ENCODE measurements at regions of chr1 and their contacts with region 1.

Region 1: DNA sequence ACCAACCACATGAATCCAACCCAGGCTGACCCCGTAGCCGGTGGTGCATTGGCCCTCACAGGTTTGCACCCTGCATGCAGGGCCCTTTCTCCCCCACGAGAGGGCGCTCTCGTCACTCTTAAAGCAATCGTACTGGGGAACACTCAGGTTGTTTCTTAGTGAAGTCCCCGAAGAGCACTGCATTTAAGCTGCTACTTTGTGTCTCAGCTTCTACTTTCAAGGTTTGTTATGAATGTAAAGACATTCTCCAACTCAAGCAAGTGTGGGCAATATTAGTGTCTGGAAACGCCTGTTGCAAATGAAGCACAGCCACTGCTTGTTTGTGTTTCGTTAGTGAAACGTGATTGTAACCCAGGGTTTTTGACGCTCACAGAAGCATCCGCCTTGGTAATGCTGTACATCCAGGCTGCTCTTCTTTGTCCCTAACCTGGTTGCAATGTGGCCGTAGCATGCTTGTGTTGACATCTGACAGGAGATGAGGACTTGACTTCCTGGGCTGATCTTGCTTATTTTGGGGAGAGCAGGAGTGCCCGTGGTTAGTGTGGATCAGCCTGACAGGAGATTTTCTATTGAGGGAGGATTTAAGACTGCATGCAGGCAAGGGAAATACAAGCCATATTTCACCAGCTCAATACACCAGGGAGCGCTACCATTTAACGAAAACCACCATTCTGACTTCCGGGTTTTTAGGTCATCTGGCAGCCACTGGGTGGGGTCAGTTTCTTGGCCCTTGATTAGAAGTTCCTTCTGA is 79.8 kb downstream of the ST6GALNAC3 start:
- DNase-seq: peak; percentile 75
- CTCF ChIP-seq: peak; percentile 93

Region 2: GRCh38 chr1:76140227-76140626 is 14.2 kb before region 1 on chr1:
- CTCF ChIA-PET with region 1: interaction called, 22 read pairs
- POLR2A ChIA-PET with region 1: no interaction called
- DNase-seq: no peak
- CTCF ChIP-seq: no peak

Region 3: DNA sequence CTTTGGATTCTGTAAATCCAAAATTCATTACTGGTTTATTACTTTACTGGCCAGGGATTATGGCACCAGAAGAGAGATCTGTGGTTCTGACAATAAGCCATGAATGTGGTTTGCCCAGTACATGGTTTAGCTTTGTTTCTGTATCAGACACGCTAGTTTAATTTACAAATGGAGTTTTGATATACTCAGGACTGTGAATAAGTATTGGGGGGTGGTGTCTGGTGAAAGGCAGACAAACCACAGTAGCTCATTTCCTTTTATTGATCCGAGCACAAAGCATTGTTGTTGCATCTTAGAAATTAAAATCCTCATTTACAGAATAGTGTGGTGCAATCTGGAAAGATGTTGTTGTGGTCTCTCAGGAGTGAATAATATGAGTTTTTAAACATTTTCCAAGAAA is 16.1 kb after region 1 on chr1:
- CTCF ChIA-PET with region 1: interaction called, 19 read pairs
- POLR2A ChIA-PET with region 1: no interaction called
- DNase-seq: no peak
- CTCF ChIP-seq: no peak

Region 4: GRCh38 chr1:76238094-76238628 is 83.8 kb after region 1 on chr1:
- CTCF ChIA-PET with region 1: no interaction called
- POLR2A ChIA-PET with region 1: no interaction called
- DNase-seq: no peak
- CTCF ChIP-seq: no peak